ENCODE measurements at regions of chr16 and their contacts with region 1.

Region 1: GRCh38 chr16:4330277-4330874 is 14.5 kb downstream of the GLIS2 start:
- DNase-seq: peak; percentile 82
- ATAC-seq: peak; percentile 82
- H3K4me3 Mint-ChIP-seq: no peak overlapping the region
- H3K27ac Mint-ChIP-seq: no peak overlapping the region
- H3K4me1 Mint-ChIP-seq: peaks cover 3% of the 10 kb centered on the region
- H3K27me3 Mint-ChIP-seq: peaks cover 10% of the 10 kb centered on the region

Region 2: DNA sequence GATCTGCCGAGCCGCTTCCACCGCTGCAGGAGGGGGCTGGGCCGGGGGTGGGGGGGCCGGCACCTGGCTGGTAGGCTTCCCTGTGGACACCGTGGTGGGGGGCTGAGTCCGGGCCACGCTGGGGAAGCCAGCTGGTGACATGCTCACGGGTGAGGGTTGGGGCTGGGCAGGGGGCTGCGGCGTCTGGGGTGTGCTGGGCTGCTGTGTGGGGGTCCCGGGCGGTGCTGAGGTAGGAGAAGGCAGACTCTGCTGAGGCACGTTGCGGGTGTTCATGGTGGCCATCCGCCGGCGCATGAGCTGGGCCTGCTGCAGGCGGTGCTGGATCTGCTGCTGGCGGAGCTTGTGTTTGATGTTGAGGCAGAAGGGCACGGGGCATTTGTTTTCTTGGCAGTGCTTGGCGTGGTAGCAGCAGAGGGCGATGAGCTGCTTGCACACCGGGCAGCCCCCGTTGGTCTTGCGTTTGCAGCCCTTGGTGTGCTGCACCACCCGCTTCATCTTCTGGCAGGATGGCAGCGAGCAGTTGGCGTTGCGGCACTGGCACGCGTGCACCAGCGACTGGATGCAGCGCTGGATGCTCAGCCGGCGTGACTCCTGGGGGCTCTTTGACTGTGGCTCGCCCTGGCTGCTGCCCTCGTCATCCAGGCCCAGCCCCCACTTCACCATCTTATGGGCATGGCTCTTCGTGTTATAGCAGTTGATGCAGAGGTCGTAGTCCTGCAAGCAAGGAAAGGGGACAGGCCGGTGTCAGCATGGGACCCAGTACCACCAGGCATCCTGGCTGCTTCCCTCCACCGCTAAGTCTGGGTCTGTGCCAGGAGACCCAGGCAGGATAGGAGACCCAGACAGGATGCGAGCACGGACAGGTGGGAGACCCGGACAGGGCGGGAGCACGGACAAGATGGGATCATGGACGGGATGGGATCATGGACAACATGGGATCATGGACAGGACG is 600.9 kb before region 1 on chr16:
- CTCF ChIA-PET with region 1: no interaction called
- DNase-seq: no peak
- ATAC-seq: no peak
- H3K4me3 Mint-ChIP-seq: no peak overlapping the region
- H3K27ac Mint-ChIP-seq: no peak overlapping the region
- H3K4me1 Mint-ChIP-seq: no peaks in the 10 kb centered on the region
- H3K27me3 Mint-ChIP-seq: no peaks in the 10 kb centered on the region

Region 3: GRCh38 chr16:4064950-4065352 is 265.4 kb before region 1 on chr16:
- CTCF ChIA-PET with region 1: no interaction called
- DNase-seq: peak; percentile 64
- ATAC-seq: peak; percentile 72
- H3K4me3 Mint-ChIP-seq: peak overlapping the region; percentile 73
- H3K27ac Mint-ChIP-seq: peak overlapping the region; percentile 83
- H3K4me1 Mint-ChIP-seq: peaks cover 21% of the 10 kb centered on the region
- H3K27me3 Mint-ChIP-seq: peaks cover 2% of the 10 kb centered on the region

Region 4: GRCh38 chr16:4261557-4262172 is 68.7 kb before region 1 on chr16:
- CTCF ChIA-PET with region 1: interaction called, 11 read pairs
- DNase-seq: peak; percentile 44
- ATAC-seq: peak; percentile 34
- H3K4me3 Mint-ChIP-seq: no peak overlapping the region
- H3K27ac Mint-ChIP-seq: peak overlapping the region; percentile 1
- H3K4me1 Mint-ChIP-seq: peaks cover 3% of the 10 kb centered on the region
- H3K27me3 Mint-ChIP-seq: no peaks in the 10 kb centered on the region

Region 5: DNA sequence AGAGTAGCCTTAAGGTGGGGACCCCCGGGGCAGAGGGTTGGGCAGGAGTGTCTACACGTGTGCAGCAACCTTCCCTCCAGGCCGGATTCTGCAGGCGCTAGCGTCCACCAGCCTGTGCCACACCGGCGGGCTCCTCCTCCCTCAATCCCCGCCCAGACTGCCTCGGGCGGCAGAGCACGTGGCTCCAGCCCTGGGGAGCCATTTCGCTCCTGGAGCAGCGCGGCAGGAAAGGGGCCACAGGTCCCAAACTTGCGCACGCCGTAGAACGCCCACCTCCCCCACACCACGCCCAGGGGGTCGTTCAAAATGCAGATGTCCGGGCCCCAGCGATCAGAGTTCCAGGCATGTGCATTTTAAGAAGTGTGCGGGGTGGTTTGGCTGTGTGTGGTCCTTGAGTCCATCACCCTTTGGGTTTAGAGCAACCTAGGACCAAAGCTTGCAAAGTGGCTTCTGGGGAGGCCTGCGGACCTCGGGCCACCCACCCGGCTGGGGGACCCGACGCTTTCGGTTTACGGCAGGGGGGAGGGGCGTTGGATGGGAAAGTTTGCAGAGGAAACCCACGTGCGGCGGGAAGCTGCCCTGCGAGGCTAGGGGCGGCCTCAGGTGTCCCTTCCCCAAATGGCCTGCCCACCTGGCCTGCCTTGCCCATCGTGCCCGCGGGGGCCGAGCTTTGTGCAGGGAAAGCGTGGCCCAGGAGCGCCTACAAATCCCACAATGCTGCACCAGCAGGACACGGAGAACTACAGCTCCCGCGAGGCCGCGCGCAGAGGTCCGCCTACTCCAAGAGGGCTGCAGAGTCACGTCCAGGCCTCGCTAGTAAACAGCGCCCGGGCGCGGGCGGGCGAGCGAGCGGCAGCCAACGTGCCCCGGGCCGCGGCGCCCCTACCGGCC is 59.0 kb before region 1 on chr16:
- CTCF ChIA-PET with region 1: interaction called, 27 read pairs
- DNase-seq: peak; percentile 95
- ATAC-seq: peak; percentile 86
- H3K4me3 Mint-ChIP-seq: peak overlapping the region; percentile 85
- H3K27ac Mint-ChIP-seq: peak overlapping the region; percentile 93
- H3K4me1 Mint-ChIP-seq: peaks cover 21% of the 10 kb centered on the region
- H3K27me3 Mint-ChIP-seq: no peaks in the 10 kb centered on the region

Region 6: DNA sequence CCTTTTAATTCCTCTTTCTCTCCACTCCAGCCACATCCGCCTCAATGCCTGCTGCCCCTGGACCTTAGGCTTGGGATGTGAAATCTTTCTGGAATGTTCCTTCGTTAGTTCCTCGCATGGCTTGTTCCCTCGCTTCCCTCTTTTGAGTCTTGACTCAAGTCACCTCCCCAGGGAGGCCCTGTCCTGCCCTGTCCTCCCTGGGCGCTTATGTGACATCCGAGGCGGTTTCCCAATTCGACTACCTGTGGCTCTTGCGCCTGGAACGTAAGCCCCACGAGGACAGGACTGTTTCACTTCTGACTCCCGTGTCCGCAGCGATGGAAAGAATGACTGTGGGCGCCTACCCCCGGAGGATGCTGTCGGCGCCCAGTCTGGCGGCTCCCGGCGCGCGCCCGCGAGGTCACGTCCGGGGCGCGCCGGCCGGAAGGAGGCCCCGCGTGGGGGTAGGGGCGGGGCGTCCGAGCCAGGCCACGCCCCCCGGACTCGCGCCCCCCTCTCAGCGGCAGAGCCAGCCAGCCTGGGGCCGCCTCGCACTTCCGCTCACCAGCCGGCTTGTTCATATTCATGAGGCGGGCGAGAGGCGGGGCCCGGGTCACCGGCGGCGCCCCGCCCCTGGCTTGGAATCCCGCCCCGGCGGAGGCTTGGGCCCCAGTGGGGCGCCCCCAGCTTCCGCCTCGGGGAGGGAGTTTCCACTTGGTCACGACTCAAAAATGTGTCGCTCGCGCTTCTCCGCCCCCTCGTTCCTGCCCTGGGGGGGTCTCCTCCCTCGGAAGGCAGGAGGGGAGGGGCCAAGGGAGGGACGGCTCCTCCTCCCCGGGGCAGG is 22.9 kb before region 1 on chr16:
- CTCF ChIA-PET with region 1: interaction called, 23 read pairs
- DNase-seq: peak; percentile 98
- ATAC-seq: peak; percentile 94
- H3K4me3 Mint-ChIP-seq: peak overlapping the region; percentile 96
- H3K27ac Mint-ChIP-seq: peak overlapping the region; percentile 97
- H3K4me1 Mint-ChIP-seq: peaks cover 22% of the 10 kb centered on the region
- H3K27me3 Mint-ChIP-seq: no peaks in the 10 kb centered on the region

Region 7: GRCh38 chr16:4371357-4372000 is 41.1 kb after region 1 on chr16 and contains the start of gene VASN:
- CTCF ChIA-PET with region 1: no interaction called
- DNase-seq: peak; percentile 65
- ATAC-seq: peak; percentile 87
- H3K4me3 Mint-ChIP-seq: peak within 1 kb of the TSS; percentile 60
- H3K27ac Mint-ChIP-seq: no peak within 1 kb of the TSS
- H3K4me1 Mint-ChIP-seq: peaks cover 4% of the 10 kb centered on the region
- H3K27me3 Mint-ChIP-seq: no peaks in the 10 kb centered on the region
- total RNA-seq, gene VASN: not detected

Measured in activated CD8-positive, alpha-beta memory T cell treated with anti-CD3 and anti-CD28 coated beads, Interleukin-2, amount 10 ng/mL, durations not matched to agents 7 days and 5 days (primary cell).